ENCODE measurements at regions of chr9 and their contacts with region 1.

Region 1: GRCh38 chr9:129979071-129979745 is 63.8 kb downstream of the FNBP1 start:
- DNase-seq: no peak
- H3K4me3 ChIP-seq: no peak overlapping the region
- CTCF ChIP-seq: no peak

Region 2: DNA sequence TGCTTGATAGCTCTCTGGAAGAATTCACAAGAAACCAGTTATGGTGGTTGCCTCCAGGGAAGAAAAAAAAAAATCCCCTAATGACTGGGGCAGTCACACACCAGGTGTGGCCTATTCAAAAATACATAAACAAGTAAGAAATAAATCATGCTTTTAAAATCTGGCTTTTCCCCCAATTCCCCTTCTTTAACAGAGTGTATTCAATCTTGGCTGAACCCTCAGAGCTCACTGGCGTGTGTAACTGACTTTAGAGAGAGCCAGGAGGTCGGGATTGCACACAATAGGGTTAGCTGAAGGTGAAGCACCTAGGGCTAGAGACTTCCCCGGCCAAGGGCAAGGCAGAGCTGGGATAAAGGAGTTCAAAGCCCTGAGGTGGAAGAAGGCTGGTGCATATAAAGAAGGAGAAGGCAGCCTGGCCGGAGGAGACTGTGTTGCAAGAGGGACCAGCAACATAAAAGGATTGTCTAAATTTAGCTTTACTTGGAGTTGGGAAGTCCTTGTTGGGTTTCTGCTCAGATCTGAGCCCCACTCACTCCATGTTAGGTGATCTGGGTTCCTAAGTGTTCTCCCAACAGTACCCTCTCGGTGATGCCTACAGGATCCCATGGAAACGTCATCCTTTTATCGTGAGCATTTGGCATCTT is 44.1 kb after region 1 on chr9:
- in situ Hi-C with region 1: loop called (anchors 5 kb)
- DNase-seq: peak; percentile 27
- H3K4me3 ChIP-seq: no peak overlapping the region
- CTCF ChIP-seq: no peak

Region 3: DNA sequence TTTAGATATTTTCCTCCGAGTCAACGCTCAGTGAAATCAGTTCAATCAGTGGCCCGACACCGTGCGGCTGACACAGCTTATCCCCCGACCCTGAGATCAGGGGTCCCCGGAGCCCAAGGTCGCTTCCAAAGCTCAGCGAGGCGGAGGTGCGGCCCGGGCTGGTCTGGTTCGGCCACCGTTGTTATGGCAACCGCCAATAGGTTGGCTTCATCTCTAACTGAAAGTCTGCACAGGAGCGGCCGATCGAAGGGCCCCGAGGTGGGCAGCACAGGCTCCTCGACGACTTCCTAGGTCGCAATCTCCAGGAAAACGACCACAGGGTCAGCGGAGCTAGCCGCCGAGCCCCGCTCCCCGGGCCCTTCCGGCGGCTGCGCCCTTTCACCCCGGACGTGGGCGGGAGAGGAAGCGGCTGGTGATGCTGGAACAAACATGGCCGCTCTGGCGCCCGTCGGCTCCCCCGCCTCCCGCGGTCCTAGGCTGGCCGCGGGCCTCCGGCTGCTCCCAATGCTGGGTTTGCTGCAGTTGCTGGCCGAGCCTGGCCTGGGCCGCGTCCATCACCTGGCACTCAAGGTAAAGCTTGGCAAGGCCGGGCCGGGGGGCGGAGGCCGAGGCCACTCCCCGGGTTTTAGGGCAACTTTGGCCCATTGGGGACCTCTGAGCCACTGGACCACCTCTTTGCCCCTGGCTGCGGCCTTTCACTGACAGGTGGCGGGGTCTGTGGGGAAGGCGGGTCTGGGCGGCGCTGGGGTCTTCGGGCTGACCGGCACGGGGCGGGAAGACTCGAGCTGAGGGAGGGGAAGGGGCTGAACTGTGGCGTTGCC is 74.5 kb after region 1 on chr9 and contains the start of gene GPR107:
- in situ Hi-C with region 1: no loop called
- DNase-seq: no peak
- H3K4me3 ChIP-seq: peak within 1 kb of the TSS; percentile 81
- CTCF ChIP-seq: no peak

Region 4: GRCh38 chr9:130073373-130073772 is 94.2 kb after region 1 on chr9:
- in situ Hi-C with region 1: no loop called
- DNase-seq: no peak
- H3K4me3 ChIP-seq: no peak overlapping the region
- CTCF ChIP-seq: no peak